Stomach (tissue), 19 donors: ENCODE measurements at regions of chr2 and their contacts with region 1.

Region 1: GRCh38 chr2:217785544-217786045 is 217.2 kb downstream of the TNS1 start:
- DNase-seq: peak; percentile 87 to 90
- H3K4me3 ChIP-seq: no peak overlapping the region
- H3K27ac ChIP-seq: peak overlapping the region in 1 of 5 donors; percentile 34
- H3K4me1 ChIP-seq: peaks cover 0 to 20% (median 5%) of the 10 kb centered on the region in 4 donors
- H3K27me3 ChIP-seq: no peaks in the 10 kb centered on the region
- CTCF ChIP-seq: peak in 5 of 7 experiments; percentile 94 to 97 (median 96)
- EP300 ChIP-seq: no peak
- POLR2A ChIP-seq: no peak

Region 2: DNA sequence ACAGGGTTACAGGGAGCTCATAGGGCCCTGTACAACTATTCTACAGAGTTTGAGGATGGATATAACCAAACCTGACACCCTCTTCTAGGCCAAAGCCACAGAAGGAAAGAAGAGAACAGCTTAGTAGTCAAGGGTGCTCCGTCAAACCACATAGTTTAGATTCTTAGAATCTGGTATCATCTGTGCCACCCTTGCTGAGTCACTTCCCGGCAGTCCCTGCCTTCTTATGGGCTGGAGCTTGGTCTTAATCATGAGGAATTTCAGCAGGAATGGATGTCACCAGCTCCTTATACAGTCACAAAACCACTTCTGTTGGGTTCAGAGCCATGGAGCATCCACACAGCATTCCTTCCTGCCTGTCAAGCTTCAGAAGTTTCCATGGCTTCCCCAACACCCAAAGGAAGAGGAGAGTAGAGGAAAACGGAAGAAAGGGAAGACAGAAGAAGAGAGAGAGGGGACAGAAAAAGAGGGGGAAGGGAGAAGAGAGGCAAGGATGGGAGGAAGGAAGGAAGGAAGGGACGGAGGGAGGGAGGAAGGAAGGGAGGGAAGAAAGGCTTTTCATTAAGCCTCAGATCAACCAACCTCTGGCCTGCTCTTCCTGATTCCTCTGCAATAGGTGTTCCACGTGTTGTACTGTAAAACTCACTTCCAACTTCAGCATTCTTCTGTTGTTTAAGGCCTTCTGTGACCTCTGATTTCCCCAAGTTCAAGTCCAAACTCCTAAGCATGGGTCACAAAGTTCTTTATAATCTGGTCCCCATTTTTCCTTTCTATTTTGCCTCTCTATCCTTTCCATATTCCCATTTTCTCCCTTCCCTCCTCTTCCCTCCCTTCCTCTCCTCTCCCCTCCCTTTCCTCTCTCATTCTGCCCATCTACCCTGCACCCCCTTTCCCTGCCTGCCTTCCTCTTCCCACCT is 679.6 kb before region 1 on chr2:
- intact Hi-C with region 1: no loop called
- DNase-seq: no peak
- H3K4me3 ChIP-seq: no peak overlapping the region
- H3K27ac ChIP-seq: peak overlapping the region in 2 of 5 donors; percentile 10 to 30
- H3K4me1 ChIP-seq: no peaks in the 10 kb centered on the region
- H3K27me3 ChIP-seq: no peaks in the 10 kb centered on the region
- CTCF ChIP-seq: no peak
- EP300 ChIP-seq: no peak
- POLR2A ChIP-seq: no peak

Region 3: GRCh38 chr2:217886720-217887309 is 101.2 kb after region 1 on chr2:
- intact Hi-C with region 1: loop called (anchors 5 kb)
- DNase-seq: peak; percentile 75 to 92
- H3K4me3 ChIP-seq: no peak overlapping the region
- H3K27ac ChIP-seq: peak overlapping the region in 3 of 5 donors; percentile 9 to 69 (median 31)
- H3K4me1 ChIP-seq: peaks cover 13 to 58% (median 30%) of the 10 kb centered on the region in 4 donors
- H3K27me3 ChIP-seq: no peaks in the 10 kb centered on the region
- CTCF ChIP-seq: peak in 5 of 7 experiments; percentile 72 to 86 (median 76)
- EP300 ChIP-seq: no peak
- POLR2A ChIP-seq: no peak

Region 4: DNA sequence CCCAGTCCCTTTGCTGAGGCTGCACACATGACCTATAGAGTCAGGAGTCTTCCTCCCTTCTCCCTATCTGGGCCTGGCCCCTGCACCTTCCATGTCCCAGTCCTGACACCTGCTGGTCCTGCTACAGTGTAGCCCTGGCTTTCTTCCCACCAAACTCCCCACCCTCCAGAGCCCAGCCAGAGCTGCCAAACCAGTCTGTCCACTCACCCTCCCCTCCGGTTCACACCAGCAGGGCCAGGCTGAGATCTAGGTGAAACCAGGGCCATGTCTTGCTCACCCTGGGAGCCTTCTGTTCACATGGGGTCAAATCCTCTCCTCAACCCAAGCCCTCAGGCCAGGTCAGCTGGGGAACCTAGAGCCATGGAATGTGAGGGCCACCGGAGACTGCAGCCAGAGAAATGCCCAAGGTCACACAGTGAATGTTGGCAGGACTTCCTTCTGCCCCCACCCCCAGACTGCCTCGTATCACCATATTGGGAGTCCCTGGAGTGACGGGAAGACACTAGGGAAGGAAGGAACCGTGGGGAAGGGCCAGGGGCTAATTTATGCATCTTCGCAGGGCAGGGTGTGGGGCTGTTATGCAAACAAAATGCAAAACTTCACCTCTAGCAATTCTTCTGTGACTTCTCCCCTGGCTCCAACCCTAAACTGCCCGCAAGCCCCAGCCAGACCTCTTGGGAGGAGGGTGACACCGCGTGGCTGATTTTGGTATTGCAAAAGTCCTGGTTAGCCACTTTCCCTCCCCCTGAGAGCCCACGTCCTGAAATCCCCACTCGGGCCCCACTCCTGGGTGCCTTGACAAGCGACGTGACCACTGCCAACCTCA is 202.6 kb after region 1 on chr2:
- intact Hi-C with region 1: loop called (anchors 5 kb)
- DNase-seq: peak; percentile 95 to 96
- H3K4me3 ChIP-seq: peak overlapping the region in 3 of 4 donors; percentile 4 to 8 (median 6)
- H3K27ac ChIP-seq: peak overlapping the region; percentile 57 to 82 (median 79)
- H3K4me1 ChIP-seq: peaks cover 16 to 29% (median 21%) of the 10 kb centered on the region in 4 donors
- H3K27me3 ChIP-seq: no peaks in the 10 kb centered on the region
- CTCF ChIP-seq: peak in 6 of 7 experiments; percentile 58 to 93 (median 86)
- EP300 ChIP-seq: no peak
- POLR2A ChIP-seq: no peak

Region 5: DNA sequence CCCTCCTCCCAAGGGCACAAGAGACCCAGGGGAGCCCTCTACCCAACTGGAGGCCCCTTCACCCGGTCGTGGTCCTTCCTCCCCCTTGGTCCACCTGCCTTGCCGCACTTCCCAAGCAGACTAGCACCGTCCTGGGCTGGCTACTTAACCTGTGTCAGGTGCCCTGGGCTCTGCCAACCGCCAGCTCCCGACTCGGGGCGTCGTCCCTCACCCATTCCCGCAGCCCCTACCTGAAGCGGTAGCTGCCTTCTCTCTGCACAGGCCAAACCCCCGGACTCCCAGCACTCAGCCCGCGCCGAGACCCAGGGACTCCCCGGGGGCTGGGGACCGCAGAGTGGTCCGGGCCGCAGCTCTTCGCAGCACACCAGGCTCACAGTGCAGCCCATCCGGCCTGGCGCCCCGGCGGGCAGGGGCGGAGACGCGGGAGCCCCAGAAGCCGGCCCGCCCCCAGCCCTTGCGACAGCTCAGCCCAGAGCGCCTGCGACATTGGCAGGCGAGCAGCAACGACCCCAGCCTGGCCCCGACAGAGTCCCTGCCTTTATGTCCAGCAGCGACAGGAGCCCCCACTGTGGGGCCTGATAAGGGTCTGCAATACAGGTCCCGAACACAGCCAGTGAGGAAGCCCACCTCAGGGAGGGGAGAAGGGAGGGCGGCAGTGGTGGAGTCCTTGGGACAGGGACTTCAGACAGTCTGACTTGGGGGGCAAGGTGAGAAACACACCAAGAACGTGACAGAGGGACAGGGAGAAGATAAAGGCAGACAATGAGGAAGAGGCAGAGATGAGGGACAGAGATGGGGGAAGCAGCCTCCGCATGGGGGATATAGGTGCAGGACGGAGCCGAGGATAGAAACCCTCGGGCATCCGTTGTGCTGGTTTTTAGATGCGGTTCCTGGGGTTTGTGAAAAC is 248.2 kb after region 1 on chr2:
- intact Hi-C with region 1: loop called (anchors 10 kb)
- DNase-seq: peak in 1 of 2 donors; percentile 52
- H3K4me3 ChIP-seq: peak overlapping the region in 2 of 4 donors; percentile 19 to 40
- H3K27ac ChIP-seq: no peak overlapping the region
- H3K4me1 ChIP-seq: peaks cover 14 to 33% (median 25%) of the 10 kb centered on the region in 4 donors
- H3K27me3 ChIP-seq: peaks cover 0 to 11% (median 3%) of the 10 kb centered on the region in 3 donors
- CTCF ChIP-seq: no peak
- EP300 ChIP-seq: no peak
- POLR2A ChIP-seq: no peak